HAP-1 (cell line): ENCODE measurements at regions of chr2 and their contacts with region 1.

Region 1: DNA sequence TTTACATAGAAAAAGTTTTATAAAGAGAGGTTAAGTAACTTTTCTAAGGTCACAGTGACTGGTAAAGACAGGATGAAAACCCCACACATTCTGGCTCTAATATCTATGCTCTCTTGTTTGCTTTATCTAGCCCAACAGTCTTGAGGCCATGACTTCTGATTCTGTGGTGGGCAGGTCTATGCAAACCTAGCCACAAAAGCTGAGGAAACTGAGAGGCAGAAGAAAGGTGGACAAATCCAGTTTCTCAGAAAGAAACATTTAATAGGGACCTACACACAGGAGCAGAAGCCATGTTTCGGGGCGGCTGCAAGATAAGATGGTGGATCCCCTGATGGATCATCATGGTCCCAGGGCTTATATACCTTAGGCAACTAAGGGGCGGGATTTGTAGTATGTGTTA is 21.8 kb downstream of the HSPD1 start:
- DNase-seq: no peak
- H3K4me3 ChIP-seq: no peak overlapping the region
- H3K4me1 ChIP-seq: no peaks in the 10 kb centered on the region
- H3K27me3 ChIP-seq: no peaks in the 10 kb centered on the region

Region 2: GRCh38 chr2:197339496-197340220 is 138.1 kb before region 1 on chr2:
- in situ Hi-C with region 1: no loop called
- DNase-seq: no peak
- H3K4me3 ChIP-seq: no peak overlapping the region
- H3K4me1 ChIP-seq: no peaks in the 10 kb centered on the region
- H3K27me3 ChIP-seq: no peaks in the 10 kb centered on the region

Region 3: GRCh38 chr2:197414515-197414914 is 63.3 kb before region 1 on chr2:
- in situ Hi-C with region 1: loop called (anchors 5 kb)
- DNase-seq: no peak
- H3K4me3 ChIP-seq: no peak overlapping the region
- H3K4me1 ChIP-seq: no peaks in the 10 kb centered on the region
- H3K27me3 ChIP-seq: no peaks in the 10 kb centered on the region